ENCODE measurements at regions of chr3 and their contacts with region 1.

Region 1: GRCh38 chr3:149393345-149394160 is 16.1 kb upstream of the TM4SF1 start:
- DNase-seq: peak; percentile 58
- H3K4me3 ChIP-seq: no peak overlapping the region
- H3K27ac ChIP-seq: no peak overlapping the region
- H3K4me1 ChIP-seq: peaks cover 10% of the 10 kb centered on the region
- H3K27me3 ChIP-seq: no peaks in the 10 kb centered on the region
- CTCF ChIP-seq: peak; percentile 93 to 98

Region 2: DNA sequence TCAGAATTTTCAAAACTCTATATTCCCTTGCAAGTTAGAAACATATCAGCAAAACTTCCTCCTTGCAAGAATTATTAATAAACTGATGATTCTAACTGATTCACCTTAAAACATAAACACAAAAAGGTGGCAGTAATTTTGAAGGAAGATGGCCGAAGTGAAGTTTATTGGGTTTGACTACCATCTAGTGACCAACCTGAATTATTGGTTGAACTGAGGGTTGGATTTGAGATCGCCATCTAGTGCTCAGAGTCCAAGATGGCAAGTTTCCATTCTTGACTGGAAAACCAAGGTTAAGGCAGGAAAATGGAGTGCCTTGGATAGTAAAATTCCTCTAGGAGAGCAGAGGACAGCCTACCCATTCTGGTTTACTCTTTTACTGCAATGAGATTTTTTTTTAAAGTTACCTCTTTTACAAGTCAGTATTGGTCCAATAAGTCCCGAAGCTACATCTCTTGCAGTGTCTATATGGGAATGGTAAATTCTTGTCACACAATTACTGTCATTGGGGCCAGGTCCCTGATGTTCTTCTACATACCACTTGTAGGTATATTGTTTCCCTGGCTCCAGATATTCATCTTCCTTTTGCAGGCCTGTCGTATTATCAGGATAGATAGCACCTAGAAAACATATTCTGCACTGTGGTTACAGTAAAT is 120.3 kb before region 1 on chr3:
- CTCF ChIA-PET with region 1: no interaction called
- dilution Hi-C with region 1: no loop called
- in situ Hi-C with region 1: no loop called
- intact Hi-C with region 1: no loop called
- DNase-seq: peak; percentile 69
- H3K4me3 ChIP-seq: no peak overlapping the region
- H3K27ac ChIP-seq: no peak overlapping the region
- H3K4me1 ChIP-seq: peaks cover 9% of the 10 kb centered on the region
- H3K27me3 ChIP-seq: no peaks in the 10 kb centered on the region
- CTCF ChIP-seq: peak; percentile 96

Region 3: GRCh38 chr3:149377408-149378377 is 15.9 kb before region 1 on chr3 and contains the start of gene TM4SF1:
- CTCF ChIA-PET with region 1: no interaction called
- dilution Hi-C with region 1: no loop called
- in situ Hi-C with region 1: no loop called
- intact Hi-C with region 1: no loop called
- DNase-seq: peak; percentile 100
- H3K4me3 ChIP-seq: peak within 1 kb of the TSS; percentile 93 to 98 (median 94)
- H3K27ac ChIP-seq: peak within 1 kb of the TSS; percentile 100
- H3K4me1 ChIP-seq: peaks cover 51% of the 10 kb centered on the region
- H3K27me3 ChIP-seq: no peaks in the 10 kb centered on the region
- CTCF ChIP-seq: no peak
- total RNA-seq, gene TM4SF1: 121 to 246 TPM

Region 4: DNA sequence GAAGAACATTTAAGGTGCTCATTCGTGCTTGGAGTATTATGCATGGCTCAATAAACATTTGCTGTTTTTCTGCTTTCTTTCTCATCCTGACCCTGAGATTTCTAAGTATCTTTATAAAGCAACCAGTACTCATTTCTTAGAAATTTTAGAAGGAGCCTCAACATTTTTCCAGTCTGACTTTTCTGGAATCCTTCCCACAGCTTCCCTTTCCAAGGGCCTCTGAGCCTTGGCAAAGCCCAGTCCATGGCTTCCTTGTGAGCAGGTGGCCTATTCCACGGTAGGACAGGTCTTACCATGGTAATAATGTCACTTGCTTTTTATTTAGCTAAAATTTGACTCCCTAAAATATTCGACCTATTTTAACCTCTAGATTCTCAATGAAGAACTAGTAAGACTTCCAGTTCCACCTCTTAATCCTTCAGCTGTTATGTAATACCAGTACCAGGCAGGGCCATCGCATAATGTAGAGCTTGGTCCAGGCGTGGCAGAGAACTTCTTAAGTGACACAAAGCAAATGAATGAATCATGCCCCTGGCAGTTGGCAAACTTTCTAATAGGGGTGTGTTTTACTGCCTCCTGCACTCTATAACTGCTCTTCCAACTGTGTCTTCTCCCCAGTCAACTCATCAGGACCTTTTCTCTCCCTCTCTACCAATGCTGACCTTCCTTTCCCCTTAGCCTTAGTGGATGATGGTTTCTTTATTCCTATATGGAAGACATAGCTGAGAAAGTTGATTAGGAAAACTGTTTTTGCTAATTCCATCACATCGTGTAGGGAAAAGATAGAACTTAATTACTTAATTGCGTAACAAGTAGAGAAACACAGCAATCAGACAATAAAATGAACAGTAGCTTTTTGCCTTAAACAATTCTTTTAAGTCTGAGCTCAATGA is 80.0 kb after region 1 on chr3:
- CTCF ChIA-PET with region 1: no interaction called
- dilution Hi-C with region 1: no loop called
- in situ Hi-C with region 1: loop called (anchors 5 to 10 kb)
- intact Hi-C with region 1: no loop called
- DNase-seq: peak; percentile 81
- H3K4me3 ChIP-seq: no peak overlapping the region
- H3K27ac ChIP-seq: no peak overlapping the region
- H3K4me1 ChIP-seq: peaks cover 28% of the 10 kb centered on the region
- H3K27me3 ChIP-seq: no peaks in the 10 kb centered on the region
- CTCF ChIP-seq: no peak

Region 5: GRCh38 chr3:149480325-149481017 is 86.9 kb after region 1 on chr3:
- CTCF ChIA-PET with region 1: interaction called, 4 read pairs
- dilution Hi-C with region 1: no loop called
- in situ Hi-C with region 1: loop called (anchors 5 to 10 kb)
- intact Hi-C with region 1: loop called (anchors 1 kb)
- DNase-seq: peak; percentile 73
- H3K4me3 ChIP-seq: no peak overlapping the region
- H3K27ac ChIP-seq: no peak overlapping the region
- H3K4me1 ChIP-seq: peaks cover 3% of the 10 kb centered on the region
- H3K27me3 ChIP-seq: no peaks in the 10 kb centered on the region
- CTCF ChIP-seq: peak; percentile 94 to 99

Region 6: DNA sequence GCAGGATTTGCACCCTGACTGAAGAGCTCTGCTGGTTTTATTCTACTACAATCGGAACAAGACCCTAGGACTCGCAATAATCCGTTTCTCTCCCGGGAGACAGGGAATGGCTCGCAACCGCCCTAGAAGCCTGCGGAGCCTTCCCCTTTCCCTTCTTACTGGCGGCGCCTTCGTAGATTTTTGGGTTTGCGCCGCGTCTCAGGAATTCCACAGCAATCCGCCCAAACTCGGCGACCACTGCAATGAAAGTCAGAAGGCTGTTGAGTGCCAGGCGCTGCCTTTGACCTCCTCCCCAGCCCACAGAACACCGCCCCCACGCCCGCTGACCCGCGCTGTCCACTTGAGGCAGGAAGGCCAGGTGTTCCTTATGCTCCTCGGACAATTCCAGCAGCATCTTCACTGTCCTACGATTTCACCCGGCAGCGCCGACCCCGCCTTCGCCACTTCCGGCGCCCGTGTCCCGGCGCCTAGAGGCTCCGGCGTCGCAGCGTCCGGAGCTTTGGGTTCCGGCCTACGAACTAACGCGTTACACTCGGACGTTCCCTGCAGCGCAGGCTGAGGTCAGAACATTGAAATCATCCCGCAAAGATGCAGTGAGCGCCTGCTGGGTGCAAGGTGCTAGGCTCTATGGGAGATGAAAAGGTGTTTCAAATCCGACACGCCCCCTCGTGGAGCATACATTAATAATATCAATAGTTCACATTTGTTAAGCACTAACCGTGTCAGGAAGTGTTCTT is 358.7 kb after region 1 on chr3 and contains the start of gene COMMD2:
- CTCF ChIA-PET with region 1: no interaction called
- dilution Hi-C with region 1: no loop called
- in situ Hi-C with region 1: no loop called
- intact Hi-C with region 1: loop called (anchors 10 kb)
- DNase-seq: peak; percentile 92
- H3K4me3 ChIP-seq: peak within 1 kb of the TSS; percentile 85 to 100 (median 98)
- H3K27ac ChIP-seq: peak within 1 kb of the TSS; percentile 75
- H3K4me1 ChIP-seq: peaks cover 17% of the 10 kb centered on the region
- H3K27me3 ChIP-seq: no peaks in the 10 kb centered on the region
- CTCF ChIP-seq: peak; percentile 27 to 37
- total RNA-seq, gene COMMD2: 29.3 to 38.8 TPM

Measured in mammary epithelial cell (primary cell).